ENCODE measurements at regions of chr17 and their contacts with region 1.

Region 1: GRCh38 chr17:57370037-57370581 is 113.8 kb downstream of the MSI2 start:
- DNase-seq: peak; percentile 76 to 84
- H3K4me3 ChIP-seq: no peak overlapping the region
- H3K4me3 Mint-ChIP-seq: peak overlapping the region; percentile 30
- H3K27ac Mint-ChIP-seq: peak overlapping the region; percentile 96
- H3K4me1 ChIP-seq: peaks cover 97% of the 10 kb centered on the region
- H3K4me1 Mint-ChIP-seq: peaks cover 69% of the 10 kb centered on the region
- H3K27me3 ChIP-seq: no peaks in the 10 kb centered on the region
- H3K27me3 Mint-ChIP-seq: no peaks in the 10 kb centered on the region
- CTCF ChIP-seq: no peak

Region 2: DNA sequence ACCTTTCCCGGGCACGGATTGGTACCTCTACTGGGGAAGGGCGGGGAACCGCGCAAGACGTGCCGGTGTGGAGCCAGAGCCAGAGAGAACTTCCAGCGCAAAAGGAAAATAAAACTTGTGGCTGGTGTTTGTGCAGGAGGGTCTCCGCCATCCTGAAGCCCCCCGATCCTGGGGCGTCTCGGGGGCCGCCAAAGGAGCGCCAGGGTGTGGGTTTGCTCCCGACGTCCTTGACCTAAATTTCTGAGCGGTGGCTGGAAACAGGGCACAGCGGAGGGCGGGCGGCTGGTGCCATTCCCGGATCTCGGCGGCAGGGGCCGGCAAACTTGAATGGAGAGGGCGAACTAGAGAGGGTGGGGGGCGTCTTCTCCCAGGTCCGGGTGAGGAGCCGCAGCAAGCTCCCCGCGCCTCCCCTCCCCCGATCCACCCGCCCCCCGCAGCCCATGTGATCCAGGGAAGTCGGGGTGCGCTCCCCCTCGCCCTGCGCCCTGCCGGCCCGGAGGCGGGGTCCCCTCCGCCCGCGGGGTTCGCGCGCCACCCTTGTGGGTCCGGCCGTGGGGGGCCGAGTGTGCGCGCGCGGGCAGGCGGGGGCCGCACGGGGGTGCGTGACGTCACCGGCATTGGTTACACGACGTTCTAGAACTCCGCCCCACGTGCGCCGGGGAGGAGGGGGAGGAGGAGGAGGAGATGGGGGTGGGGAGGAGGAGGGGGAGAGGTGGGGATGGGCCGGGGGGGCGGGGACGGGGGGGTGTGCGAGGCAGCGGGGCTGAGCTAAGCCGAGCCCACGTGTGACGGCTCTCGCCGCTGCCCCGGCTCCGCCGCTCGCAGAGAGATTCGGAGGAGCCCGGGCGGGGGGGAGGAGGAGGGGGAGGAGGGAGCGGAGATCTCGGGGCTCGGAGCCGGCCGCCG is 114.1 kb before region 1 on chr17 and contains the start of gene MSI2:
- CTCF ChIA-PET with region 1: no interaction called
- POLR2A ChIA-PET with region 1: no interaction called
- intact Hi-C with region 1: loop called (anchors 5 kb)
- DNase-seq: peak; percentile 90 to 94
- H3K4me3 ChIP-seq: peak within 1 kb of the TSS; percentile 73
- H3K4me3 Mint-ChIP-seq: peak within 1 kb of the TSS; percentile 95
- H3K27ac Mint-ChIP-seq: peak within 1 kb of the TSS; percentile 92
- H3K4me1 ChIP-seq: peaks cover 17% of the 10 kb centered on the region; the same call in 1 of the 2 replicates
- H3K4me1 Mint-ChIP-seq: peaks cover 23% of the 10 kb centered on the region
- H3K27me3 ChIP-seq: no peaks in the 10 kb centered on the region
- H3K27me3 Mint-ChIP-seq: no peaks in the 10 kb centered on the region
- CTCF ChIP-seq: no peak
- total RNA-seq, gene MSI2: 174 and 185 TPM in 2 replicates

Region 3: GRCh38 chr17:57357399-57357807 is 12.7 kb before region 1 on chr17:
- CTCF ChIA-PET with region 1: interaction called, 3 read pairs
- POLR2A ChIA-PET with region 1: no interaction called
- intact Hi-C with region 1: loop called (anchors 1 kb)
- DNase-seq: no peak
- H3K4me3 ChIP-seq: no peak overlapping the region
- H3K4me3 Mint-ChIP-seq: no peak overlapping the region
- H3K27ac Mint-ChIP-seq: peak overlapping the region; percentile 77
- H3K4me1 ChIP-seq: peaks cover 31% of the 10 kb centered on the region
- H3K4me1 Mint-ChIP-seq: peaks cover 49% of the 10 kb centered on the region
- H3K27me3 ChIP-seq: no peaks in the 10 kb centered on the region
- H3K27me3 Mint-ChIP-seq: no peaks in the 10 kb centered on the region
- CTCF ChIP-seq: no peak

Region 4: DNA sequence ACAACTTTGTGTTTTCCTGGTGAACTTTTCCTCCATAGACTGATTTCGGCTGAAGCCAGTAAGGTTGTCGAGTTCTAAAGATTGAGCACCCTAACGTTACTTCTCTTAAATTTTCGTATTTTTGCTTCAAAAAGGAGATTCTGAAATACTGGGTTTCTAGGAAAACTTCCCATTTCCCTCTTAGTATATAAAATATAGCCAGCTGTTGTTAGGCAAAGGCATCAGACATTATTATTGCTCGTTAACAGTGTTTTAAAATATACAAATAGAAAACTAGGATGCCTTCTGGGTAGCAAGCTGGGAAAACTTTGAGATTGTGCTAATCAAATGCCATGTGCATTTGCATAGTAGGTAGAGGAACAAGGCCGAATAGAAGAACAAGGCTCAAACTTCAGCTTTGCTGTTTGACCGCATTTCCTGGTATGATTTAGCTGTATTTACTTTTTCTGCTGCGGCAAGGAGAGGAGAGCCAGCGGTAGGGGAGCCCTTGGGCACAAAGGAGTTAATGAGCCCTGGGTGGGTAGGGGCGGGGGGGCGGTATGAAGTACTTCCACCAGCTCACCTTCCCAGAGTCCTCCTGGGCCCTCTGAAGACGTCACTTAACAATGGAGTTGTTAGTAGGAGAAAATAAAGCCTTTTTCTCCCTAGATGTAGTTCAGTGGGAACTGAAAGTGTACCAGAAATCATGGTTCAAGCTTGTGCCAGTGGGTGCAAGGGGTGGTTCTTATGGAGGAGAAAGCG is 38.1 kb after region 1 on chr17:
- CTCF ChIA-PET with region 1: no interaction called
- POLR2A ChIA-PET with region 1: no interaction called
- intact Hi-C with region 1: loop called (anchors 2 kb)
- DNase-seq: no peak
- H3K4me3 ChIP-seq: no peak overlapping the region
- H3K4me3 Mint-ChIP-seq: no peak overlapping the region
- H3K27ac Mint-ChIP-seq: peak overlapping the region; percentile 93
- H3K4me1 ChIP-seq: peaks cover 30% of the 10 kb centered on the region
- H3K4me1 Mint-ChIP-seq: peaks cover 32% of the 10 kb centered on the region
- H3K27me3 ChIP-seq: no peaks in the 10 kb centered on the region; the same call in 1 of the 2 replicates
- H3K27me3 Mint-ChIP-seq: no peaks in the 10 kb centered on the region
- CTCF ChIP-seq: no peak

Region 5: DNA sequence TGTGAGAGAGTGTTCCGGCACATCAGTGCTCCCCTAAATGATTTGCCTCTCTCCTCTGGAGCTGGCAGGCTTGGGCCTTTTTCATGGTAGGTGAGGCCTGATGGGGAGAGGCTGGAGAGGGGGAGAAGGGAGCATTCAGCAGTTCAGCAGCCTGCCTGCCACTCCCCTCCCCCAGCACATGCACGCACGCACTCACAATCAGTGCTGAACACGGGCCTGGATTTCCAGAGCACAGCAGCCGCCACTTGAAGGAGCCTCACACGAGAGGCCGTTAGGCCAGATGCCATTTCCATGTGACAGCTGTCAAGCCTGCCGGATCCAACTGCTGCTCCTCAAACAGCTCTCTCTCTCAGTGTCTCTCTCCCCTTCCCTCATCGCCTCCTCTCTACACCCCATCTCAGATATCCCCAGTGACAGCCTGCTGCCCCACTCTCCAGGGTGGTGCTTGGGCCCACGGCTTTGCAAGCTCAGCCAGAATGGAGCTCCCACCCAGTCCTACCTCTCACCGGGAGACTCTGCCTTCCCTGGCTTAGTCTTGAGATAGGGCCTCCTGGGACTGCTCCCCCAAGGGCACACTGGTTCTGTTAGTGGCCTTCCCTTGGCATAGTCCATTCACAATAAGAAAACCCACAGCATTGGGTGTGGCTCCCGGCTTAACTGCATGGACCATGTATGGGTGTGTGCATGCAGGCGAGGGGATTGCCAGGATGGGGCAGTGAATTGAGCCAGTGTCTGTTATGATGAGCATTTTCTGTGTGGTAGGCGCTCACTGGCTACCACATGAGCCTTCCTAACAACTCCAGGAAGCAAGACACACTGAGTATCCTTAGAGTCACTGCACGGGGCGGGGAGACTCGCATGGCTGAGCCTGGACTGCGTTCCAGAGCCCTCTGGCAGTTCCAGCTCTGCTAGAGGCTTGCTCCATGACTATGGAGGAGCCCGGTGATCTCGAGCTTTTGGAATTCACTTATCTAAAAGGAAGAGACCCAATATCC is 148.8 kb after region 1 on chr17:
- CTCF ChIA-PET with region 1: no interaction called
- POLR2A ChIA-PET with region 1: no interaction called
- intact Hi-C with region 1: loop called (anchors 5 kb)
- DNase-seq: peak; percentile 69 to 82
- H3K4me3 ChIP-seq: no peak overlapping the region
- H3K4me3 Mint-ChIP-seq: peak overlapping the region; percentile 31
- H3K27ac Mint-ChIP-seq: peak overlapping the region; percentile 94
- H3K4me1 ChIP-seq: peaks cover 60% of the 10 kb centered on the region
- H3K4me1 Mint-ChIP-seq: peaks cover 55% of the 10 kb centered on the region
- H3K27me3 ChIP-seq: no peaks in the 10 kb centered on the region
- H3K27me3 Mint-ChIP-seq: no peaks in the 10 kb centered on the region
- CTCF ChIP-seq: no peak

Measured in Caco-2 (cell line).